Panc1 (cell line): ENCODE measurements at regions of chr3 and their contacts with region 1.

Region 1: DNA sequence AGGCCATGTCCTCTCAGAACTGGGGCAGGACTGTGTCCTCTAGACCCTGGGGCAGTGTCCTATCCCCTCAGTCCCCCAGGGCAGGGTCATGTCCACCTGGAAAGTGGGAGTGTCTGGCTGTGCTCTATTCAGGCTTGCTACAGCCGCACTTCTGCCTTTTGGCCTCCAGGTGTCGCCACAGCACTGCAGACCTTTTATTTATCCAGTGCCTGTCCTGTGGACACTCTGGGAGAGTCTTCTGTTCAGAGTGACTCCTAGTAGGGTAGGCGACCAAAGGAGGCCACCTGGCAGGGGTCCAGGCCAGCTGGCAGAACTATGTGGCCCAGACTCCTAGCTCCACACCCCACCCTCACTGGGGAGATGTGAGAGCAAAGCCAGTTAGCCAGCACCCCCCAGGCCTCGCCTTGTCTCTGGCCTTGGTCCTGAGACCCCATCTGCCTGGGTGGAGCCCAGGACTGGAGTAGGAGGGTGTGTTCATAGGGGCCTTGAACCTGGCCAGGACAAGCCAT is 3.9 kb downstream of the TMIE start:
- DNase-seq: peak; percentile 45
- ATAC-seq: peak; percentile 91
- H3K4me3 ChIP-seq: no peak overlapping the region
- H3K27ac ChIP-seq: no peak overlapping the region
- H3K4me1 ChIP-seq: no peaks in the 10 kb centered on the region
- H3K27me3 ChIP-seq: no peaks in the 10 kb centered on the region
- CTCF ChIP-seq: peak; percentile 89

Region 2: DNA sequence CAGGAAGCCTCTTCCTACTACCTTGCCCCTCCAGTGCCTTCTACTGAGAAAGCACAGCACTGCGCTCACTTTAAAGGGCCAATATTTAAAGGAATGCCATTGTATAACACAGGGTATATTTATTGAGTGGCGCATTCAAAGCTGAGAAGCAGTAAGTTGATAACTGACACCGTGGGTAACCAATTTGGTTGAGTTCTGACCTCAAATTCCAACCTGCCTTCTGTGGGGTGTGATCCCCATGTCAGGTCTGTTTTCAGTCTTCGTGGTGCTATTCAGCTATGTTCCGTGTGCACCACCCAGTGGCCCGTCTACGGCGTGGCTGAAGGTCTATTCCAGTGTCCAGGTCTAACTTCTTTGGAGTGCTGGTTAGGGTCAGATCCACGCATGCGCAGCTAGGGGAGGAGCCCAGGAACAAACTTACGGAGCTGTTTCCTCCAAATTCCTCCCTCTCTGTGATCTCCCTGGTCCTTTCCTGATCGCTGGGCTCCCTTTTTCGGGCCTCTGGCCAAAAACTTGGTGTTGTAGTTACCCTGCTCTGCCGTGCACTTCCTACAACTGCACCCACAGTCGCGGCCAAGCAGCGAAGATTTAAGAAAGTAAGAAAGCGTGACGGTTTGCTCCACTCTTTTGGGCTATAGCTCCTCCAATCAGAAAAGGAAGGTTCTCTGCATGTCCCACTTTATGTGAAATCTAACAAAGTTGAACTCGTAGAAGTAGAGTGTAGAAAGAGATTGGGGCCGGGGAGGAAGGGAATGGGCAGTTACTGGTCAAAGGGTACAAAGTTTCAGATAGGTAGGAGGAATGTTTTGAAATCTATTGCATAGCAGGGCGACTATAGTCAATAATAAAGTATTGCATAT is 146.7 kb before region 1 on chr3:
- CTCF ChIA-PET with region 1: no interaction called
- POLR2A ChIA-PET with region 1: no interaction called
- in situ Hi-C with region 1: no loop called
- intact Hi-C with region 1: no loop called
- DNase-seq: peak; percentile 71
- ATAC-seq: peak; percentile 100
- H3K4me3 ChIP-seq: peak overlapping the region; percentile 57 to 74
- H3K27ac ChIP-seq: peak overlapping the region; percentile 71; the same call in 1 of the 2 replicates
- H3K4me1 ChIP-seq: no peaks in the 10 kb centered on the region; the same call in 1 of the 2 replicates
- H3K27me3 ChIP-seq: no peaks in the 10 kb centered on the region; the same call in 1 of the 2 replicates
- CTCF ChIP-seq: peak; percentile 80

Region 3: GRCh38 chr3:46578973-46579755 is 125.9 kb before region 1 on chr3:
- CTCF ChIA-PET with region 1: no interaction called
- POLR2A ChIA-PET with region 1: no interaction called
- in situ Hi-C with region 1: no loop called
- intact Hi-C with region 1: no loop called
- DNase-seq: no peak
- ATAC-seq: no peak
- H3K4me3 ChIP-seq: no peak overlapping the region
- H3K27ac ChIP-seq: no peak overlapping the region
- H3K4me1 ChIP-seq: no peaks in the 10 kb centered on the region
- H3K27me3 ChIP-seq: no peaks in the 10 kb centered on the region
- CTCF ChIP-seq: no peak

Region 4: DNA sequence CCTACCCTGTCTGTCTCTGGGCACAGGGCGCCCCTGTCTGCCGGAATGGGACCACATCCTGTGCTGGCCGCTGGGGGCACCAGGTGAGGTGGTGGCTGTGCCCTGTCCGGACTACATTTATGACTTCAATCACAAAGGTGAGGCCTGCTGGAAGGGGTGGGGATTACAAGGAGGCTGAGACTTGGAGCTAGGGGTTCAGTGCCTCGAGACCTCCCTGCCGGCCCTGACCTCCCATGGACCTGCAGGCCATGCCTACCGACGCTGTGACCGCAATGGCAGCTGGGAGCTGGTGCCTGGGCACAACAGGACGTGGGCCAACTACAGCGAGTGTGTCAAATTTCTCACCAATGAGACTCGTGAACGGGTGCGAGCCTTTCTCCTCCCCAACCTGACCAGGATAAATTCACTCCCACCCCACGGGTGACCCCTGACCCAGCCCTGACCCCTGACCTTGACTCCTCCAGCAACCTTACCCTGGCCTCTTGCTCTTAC is 192.8 kb after region 1 on chr3:
- CTCF ChIA-PET with region 1: no interaction called
- POLR2A ChIA-PET with region 1: no interaction called
- in situ Hi-C with region 1: no loop called
- intact Hi-C with region 1: loop called (anchors 2 kb)
- DNase-seq: no peak
- ATAC-seq: no peak
- H3K4me3 ChIP-seq: no peak overlapping the region
- H3K27ac ChIP-seq: no peak overlapping the region
- H3K4me1 ChIP-seq: peaks cover under 1% of the 10 kb centered on the region; the same call in 1 of the 2 replicates
- H3K27me3 ChIP-seq: no peaks in the 10 kb centered on the region
- CTCF ChIP-seq: no peak

Region 5: GRCh38 chr3:46909535-46910442 is 204.7 kb after region 1 on chr3:
- CTCF ChIA-PET with region 1: interaction called, 8 read pairs
- POLR2A ChIA-PET with region 1: no interaction called
- in situ Hi-C with region 1: no loop called
- intact Hi-C with region 1: loop called (anchors 2 kb)
- DNase-seq: peak; percentile 55
- ATAC-seq: peak; percentile 87
- H3K4me3 ChIP-seq: no peak overlapping the region
- H3K27ac ChIP-seq: no peak overlapping the region
- H3K4me1 ChIP-seq: no peaks in the 10 kb centered on the region
- H3K27me3 ChIP-seq: no peaks in the 10 kb centered on the region
- CTCF ChIP-seq: peak; percentile 89